Sigmoid colon (tissue), 7 donors: ENCODE measurements at regions of chr6 and their contacts with region 1.

Region 1: DNA sequence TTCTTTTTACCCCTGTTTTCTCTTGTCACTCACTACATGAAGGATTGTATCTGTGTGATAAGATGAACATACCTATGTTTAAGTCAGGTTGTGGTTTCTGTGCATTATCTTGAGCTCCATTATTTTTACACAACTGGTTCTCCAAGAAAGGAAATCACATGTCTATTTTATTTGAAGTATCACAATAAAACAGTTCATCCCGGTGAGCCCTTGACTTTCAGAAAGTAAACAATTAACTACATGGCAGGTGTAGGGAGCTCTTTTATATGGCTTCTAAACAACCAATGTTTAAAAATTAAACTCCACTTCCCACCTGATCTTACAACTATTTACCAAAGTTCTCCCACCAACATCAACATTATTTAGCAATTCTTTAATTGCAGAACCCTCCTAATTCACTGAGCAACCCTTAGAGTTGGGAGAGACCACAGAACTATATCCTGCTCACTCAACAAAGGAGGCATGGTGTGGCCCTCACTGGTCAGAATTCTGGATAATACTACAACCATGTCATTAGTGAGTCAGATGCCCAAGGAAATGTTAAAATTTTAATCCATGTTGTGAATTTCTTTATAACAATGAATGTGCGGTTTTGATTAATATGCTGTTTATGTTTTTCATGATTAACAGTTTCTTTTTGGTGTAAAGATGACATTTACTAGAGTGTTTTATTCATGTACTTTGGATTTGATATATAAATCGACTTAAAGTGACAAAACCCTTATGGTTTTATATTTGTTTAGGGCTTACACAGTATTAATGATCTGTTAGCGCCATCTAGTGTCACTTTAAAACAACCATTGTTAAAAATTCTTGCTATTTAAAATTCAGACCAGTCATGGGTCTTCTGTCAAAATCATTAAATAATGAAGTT is 50.0 kb upstream of the SCGN start:
- DNase-seq: no peak
- H3K4me3 ChIP-seq: no peak overlapping the region
- H3K27ac ChIP-seq: no peak overlapping the region
- H3K4me1 ChIP-seq: no peaks in the 10 kb centered on the region
- H3K27me3 ChIP-seq: no peaks in the 10 kb centered on the region
- CTCF ChIP-seq: peak in 2 of 4 experiments; percentile 42 to 45
- EP300 ChIP-seq: no peak
- POLR2A ChIP-seq: no peak

Region 2: DNA sequence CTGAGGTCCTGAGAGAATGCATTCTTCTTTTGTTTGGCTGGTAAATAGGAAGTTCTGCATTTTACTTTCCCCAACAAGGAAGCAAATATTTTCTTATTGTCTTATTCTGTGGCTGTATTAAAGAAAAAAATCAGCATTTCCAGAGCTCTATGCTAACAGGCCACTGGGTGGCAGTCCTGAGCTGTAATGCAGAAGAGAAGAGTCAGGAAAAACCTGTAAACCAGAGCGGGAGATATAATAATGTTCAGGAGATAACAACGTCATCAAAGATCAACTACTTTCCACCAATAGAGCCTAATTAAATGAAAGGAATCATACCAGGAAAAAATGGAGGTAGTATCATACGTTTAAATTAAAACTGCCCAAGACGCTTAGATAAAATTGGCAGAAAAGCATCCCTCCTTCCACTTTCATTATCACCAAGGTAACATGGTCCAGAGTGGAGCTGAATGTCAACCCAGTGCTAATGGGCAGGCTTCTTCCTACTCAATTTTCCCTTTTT is 378.5 kb before region 1 on chr6:
- intact Hi-C with region 1: loop called (anchors 5 kb)
- DNase-seq: no peak
- H3K4me3 ChIP-seq: peak overlapping the region in 3 of 4 donors; percentile 11 to 34 (median 28)
- H3K27ac ChIP-seq: no peak overlapping the region
- H3K4me1 ChIP-seq: peaks cover 0 to 8% (median 5%) of the 10 kb centered on the region in 4 donors
- H3K27me3 ChIP-seq: no peaks in the 10 kb centered on the region
- CTCF ChIP-seq: peak; percentile 49 to 82 (median 75)
- EP300 ChIP-seq: no peak
- POLR2A ChIP-seq: no peak

Region 3: GRCh38 chr6:25263657-25264056 is 338.4 kb before region 1 on chr6:
- intact Hi-C with region 1: loop called (anchors 5 kb)
- DNase-seq: no peak
- H3K4me3 ChIP-seq: no peak overlapping the region
- H3K27ac ChIP-seq: no peak overlapping the region
- H3K4me1 ChIP-seq: no peaks in the 10 kb centered on the region
- H3K27me3 ChIP-seq: no peaks in the 10 kb centered on the region
- CTCF ChIP-seq: no peak
- EP300 ChIP-seq: no peak
- POLR2A ChIP-seq: no peak